Activated CD8-positive, alpha-beta memory T cell treated with anti-CD3 and anti-CD28 coated beads, Interleukin-2, amount 10 ng/mL, durations not matched to agents 7 days and 5 days (primary cell): ENCODE measurements at regions of chr6 and their contacts with region 1.

Region 1: GRCh38 chr6:18503593-18504231 is 116.6 kb downstream of the RNF144B start:
- DNase-seq: peak; percentile 44
- ATAC-seq: peak; percentile 57
- H3K4me3 Mint-ChIP-seq: no peak overlapping the region
- H3K27ac Mint-ChIP-seq: no peak overlapping the region
- H3K4me1 Mint-ChIP-seq: peaks cover 1% of the 10 kb centered on the region
- H3K27me3 Mint-ChIP-seq: peaks cover 13% of the 10 kb centered on the region

Region 2: GRCh38 chr6:18323935-18324705 is 179.6 kb before region 1 on chr6:
- CTCF ChIA-PET with region 1: interaction called, 22 read pairs
- DNase-seq: no peak
- ATAC-seq: peak; percentile 57
- H3K4me3 Mint-ChIP-seq: no peak overlapping the region
- H3K27ac Mint-ChIP-seq: no peak overlapping the region
- H3K4me1 Mint-ChIP-seq: peaks cover 9% of the 10 kb centered on the region
- H3K27me3 Mint-ChIP-seq: peaks cover 5% of the 10 kb centered on the region